ENCODE measurements at regions of chr10 and their contacts with region 1.

Region 1: DNA sequence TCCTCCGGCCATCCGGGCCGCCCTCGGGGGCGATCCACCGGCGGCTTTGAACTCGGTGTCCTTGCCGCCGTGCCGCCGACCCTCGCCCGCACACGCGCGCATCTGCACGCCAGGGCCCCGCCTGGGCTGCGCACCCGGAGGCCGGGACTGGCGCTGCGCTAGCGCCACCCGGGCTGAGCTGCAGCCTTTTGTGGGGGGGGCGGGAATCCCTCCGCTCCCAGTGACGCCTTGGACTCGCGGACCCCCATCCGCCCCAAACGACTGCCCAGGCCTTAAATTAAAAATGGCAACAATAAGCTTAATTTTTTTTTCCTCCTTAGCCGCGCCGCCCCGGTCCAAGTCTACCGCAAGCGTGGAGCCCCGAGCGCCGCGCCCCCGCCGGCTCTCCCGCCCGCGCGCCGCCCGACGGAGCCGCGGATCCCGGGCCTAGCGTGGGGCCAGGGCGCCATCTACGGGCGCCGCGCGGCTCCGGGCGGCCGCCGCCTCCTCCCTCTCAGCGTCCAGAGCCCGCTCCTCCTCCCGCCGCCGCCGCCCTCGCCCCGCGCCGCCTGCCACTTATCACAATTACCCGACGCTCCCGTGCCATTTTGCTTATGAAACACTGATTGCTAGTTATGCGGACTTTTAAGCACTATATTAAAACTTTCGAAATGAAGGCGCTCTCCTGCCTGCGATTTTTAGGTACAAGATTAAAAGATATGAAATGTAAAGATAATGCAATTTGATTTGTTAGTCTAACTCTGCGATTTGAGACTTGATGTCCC is 7.5 kb upstream of the EBF3 start:
- DNase-seq: peak; percentile 64
- ATAC-seq: peak; percentile 91
- H3K4me3 Mint-ChIP-seq: no peak overlapping the region
- H3K27ac Mint-ChIP-seq: no peak overlapping the region
- H3K4me1 Mint-ChIP-seq: peaks cover 11% of the 10 kb centered on the region
- H3K27me3 Mint-ChIP-seq: peaks cover 62% of the 10 kb centered on the region
- CTCF ChIP-seq: peak; percentile 58

Region 2: GRCh38 chr10:129888784-129889616 is 82.6 kb before region 1 on chr10:
- CTCF ChIA-PET with region 1: interaction called, 17 read pairs
- POLR2A ChIA-PET with region 1: no interaction called
- intact Hi-C with region 1: loop called (anchors 5 kb)
- DNase-seq: peak; percentile 65
- ATAC-seq: peak; percentile 72
- H3K4me3 Mint-ChIP-seq: no peak overlapping the region
- H3K27ac Mint-ChIP-seq: no peak overlapping the region
- H3K4me1 Mint-ChIP-seq: no peaks in the 10 kb centered on the region
- H3K27me3 Mint-ChIP-seq: no peaks in the 10 kb centered on the region
- CTCF ChIP-seq: peak; percentile 48

Region 3: GRCh38 chr10:129958148-129958628 is 13.4 kb before region 1 on chr10:
- CTCF ChIA-PET with region 1: interaction called, 19 read pairs
- POLR2A ChIA-PET with region 1: no interaction called
- intact Hi-C with region 1: no loop called
- DNase-seq: no peak
- ATAC-seq: no peak
- H3K4me3 Mint-ChIP-seq: peak overlapping the region; percentile 40
- H3K27ac Mint-ChIP-seq: no peak overlapping the region
- H3K4me1 Mint-ChIP-seq: peaks cover 22% of the 10 kb centered on the region
- H3K27me3 Mint-ChIP-seq: peaks cover 61% of the 10 kb centered on the region
- CTCF ChIP-seq: no peak

Region 4: GRCh38 chr10:130003787-130004613 is 32.4 kb after region 1 on chr10:
- CTCF ChIA-PET with region 1: no interaction called
- POLR2A ChIA-PET with region 1: no interaction called
- intact Hi-C with region 1: no loop called
- DNase-seq: no peak
- ATAC-seq: no peak
- H3K4me3 Mint-ChIP-seq: no peak overlapping the region
- H3K27ac Mint-ChIP-seq: no peak overlapping the region
- H3K4me1 Mint-ChIP-seq: no peaks in the 10 kb centered on the region
- H3K27me3 Mint-ChIP-seq: peaks cover 19% of the 10 kb centered on the region
- CTCF ChIP-seq: no peak